PC-3 (cell line): ENCODE measurements at regions of chr1 and their contacts with region 1.

Region 1: GRCh38 chr1:199794105-199794863 is 233.2 kb upstream of the NR5A2 start:
- DNase-seq: peak; percentile 40
- ATAC-seq: no peak
- H3K4me3 ChIP-seq: no peak overlapping the region
- H3K27ac ChIP-seq: no peak overlapping the region
- H3K4me1 ChIP-seq: no peaks in the 10 kb centered on the region
- H3K27me3 ChIP-seq: no peaks in the 10 kb centered on the region
- CTCF ChIP-seq: no peak

Region 2: DNA sequence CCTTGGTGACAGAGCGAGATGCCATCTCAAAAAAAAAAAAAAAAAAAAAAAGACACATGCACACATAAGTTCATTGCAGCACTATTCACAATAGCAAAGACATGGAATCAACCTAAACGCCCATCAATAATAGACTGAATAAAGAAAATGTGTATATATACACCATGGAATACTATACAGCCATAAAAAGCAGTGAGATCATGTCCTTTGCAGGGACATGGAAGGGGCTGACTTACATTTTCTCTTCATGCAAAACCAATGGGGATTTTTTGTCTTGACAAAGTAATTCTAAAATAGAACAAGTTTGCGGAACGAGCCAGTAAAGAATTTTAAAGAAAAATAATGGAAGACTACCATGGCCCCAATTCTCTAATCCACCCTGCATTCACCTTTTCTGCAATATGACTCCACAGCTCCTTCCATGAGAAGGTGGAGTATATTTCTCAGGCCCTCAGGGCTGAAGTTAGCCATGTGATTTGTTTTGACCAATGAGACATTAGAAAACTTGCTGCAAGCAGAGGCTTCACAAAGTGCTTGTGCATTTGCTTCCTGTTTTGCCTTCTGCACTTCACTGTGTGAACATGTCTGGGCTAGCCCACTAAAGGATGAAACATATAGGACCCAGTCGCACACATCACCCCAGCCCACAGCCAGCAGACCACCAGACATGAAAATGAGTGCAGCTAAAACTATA is 154.4 kb after region 1 on chr1:
- CTCF ChIA-PET with region 1: no interaction called
- POLR2A ChIA-PET with region 1: no interaction called
- intact Hi-C with region 1: loop called (anchors 10 kb)
- DNase-seq: peak; percentile 64
- ATAC-seq: peak; percentile 18; the same call in 1 of the 2 replicates
- H3K4me3 ChIP-seq: no peak overlapping the region
- H3K27ac ChIP-seq: no peak overlapping the region
- H3K4me1 ChIP-seq: no peaks in the 10 kb centered on the region
- H3K27me3 ChIP-seq: no peaks in the 10 kb centered on the region
- CTCF ChIP-seq: no peak